CD8-positive, alpha-beta T cell (primary cell): ENCODE measurements at regions of chr12 and their contacts with region 1.

Region 1: GRCh38 chr12:14249368-14249767 is 116.1 kb upstream of the ATF7IP start:
- DNase-seq: no peak
- ATAC-seq: no peak
- H3K4me3 ChIP-seq: no peak overlapping the region
- H3K4me3 Mint-ChIP-seq: no peak overlapping the region
- H3K27ac ChIP-seq: no peak overlapping the region
- H3K27ac Mint-ChIP-seq: no peak overlapping the region
- H3K4me1 ChIP-seq: no peaks in the 10 kb centered on the region
- H3K4me1 Mint-ChIP-seq: peaks cover 2% of the 10 kb centered on the region
- H3K27me3 ChIP-seq: no peaks in the 10 kb centered on the region
- H3K27me3 Mint-ChIP-seq: no peaks in the 10 kb centered on the region
- CTCF ChIP-seq: no peak

Region 2: GRCh38 chr12:14290951-14291350 is 41.6 kb after region 1 on chr12:
- CTCF ChIA-PET with region 1: no interaction called
- POLR2A ChIA-PET with region 1: no interaction called
- intact Hi-C with region 1: loop called in 1 of 2 experiments (anchors 1 kb)
- DNase-seq: no peak
- ATAC-seq: no peak
- H3K4me3 ChIP-seq: no peak overlapping the region
- H3K4me3 Mint-ChIP-seq: no peak overlapping the region
- H3K27ac ChIP-seq: no peak overlapping the region
- H3K27ac Mint-ChIP-seq: no peak overlapping the region
- H3K4me1 ChIP-seq: no peaks in the 10 kb centered on the region
- H3K4me1 Mint-ChIP-seq: peaks cover 5% of the 10 kb centered on the region
- H3K27me3 ChIP-seq: no peaks in the 10 kb centered on the region
- H3K27me3 Mint-ChIP-seq: no peaks in the 10 kb centered on the region
- CTCF ChIP-seq: no peak

Region 3: DNA sequence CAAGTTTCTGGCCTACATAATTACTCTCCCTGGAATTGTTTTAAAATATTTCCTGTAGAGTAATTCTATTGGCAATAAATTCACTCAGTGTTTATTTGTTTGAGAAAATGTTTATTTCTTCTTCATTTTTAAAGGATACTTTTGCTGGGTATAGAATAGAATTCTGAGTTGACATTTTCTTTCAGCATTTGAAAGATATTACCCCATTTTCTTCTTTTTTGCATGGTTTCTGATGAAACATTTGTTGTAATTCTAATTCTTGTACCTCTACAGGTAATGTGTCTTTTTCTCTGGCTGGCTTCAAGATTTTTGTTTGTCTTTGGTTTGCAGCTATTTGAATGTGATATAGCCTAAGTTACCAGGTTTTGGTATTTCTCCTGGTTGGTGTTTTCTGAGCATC is 91.0 kb after region 1 on chr12:
- CTCF ChIA-PET with region 1: no interaction called
- POLR2A ChIA-PET with region 1: no interaction called
- intact Hi-C with region 1: no loop called
- DNase-seq: no peak
- ATAC-seq: no peak
- H3K4me3 ChIP-seq: no peak overlapping the region
- H3K4me3 Mint-ChIP-seq: no peak overlapping the region
- H3K27ac ChIP-seq: no peak overlapping the region
- H3K27ac Mint-ChIP-seq: no peak overlapping the region
- H3K4me1 ChIP-seq: no peaks in the 10 kb centered on the region
- H3K4me1 Mint-ChIP-seq: no peaks in the 10 kb centered on the region
- H3K27me3 ChIP-seq: no peaks in the 10 kb centered on the region
- H3K27me3 Mint-ChIP-seq: no peaks in the 10 kb centered on the region
- CTCF ChIP-seq: no peak

Region 4: GRCh38 chr12:14410841-14411569 is 161.6 kb after region 1 on chr12:
- CTCF ChIA-PET with region 1: no interaction called
- POLR2A ChIA-PET with region 1: no interaction called
- intact Hi-C with region 1: no loop called
- DNase-seq: peak in 5 of 9 experiments; percentile 22 to 81 (median 50)
- ATAC-seq: peak; percentile 78
- H3K4me3 ChIP-seq: no peak overlapping the region
- H3K4me3 Mint-ChIP-seq: peak overlapping the region; percentile 9
- H3K27ac ChIP-seq: peak overlapping the region in 1 of 2 experiments; percentile 62
- H3K27ac Mint-ChIP-seq: peak overlapping the region; percentile 39
- H3K4me1 ChIP-seq: peaks cover 79% of the 10 kb centered on the region
- H3K4me1 Mint-ChIP-seq: peaks cover 68% of the 10 kb centered on the region
- H3K27me3 ChIP-seq: no peaks in the 10 kb centered on the region
- H3K27me3 Mint-ChIP-seq: no peaks in the 10 kb centered on the region
- CTCF ChIP-seq: no peak